ENCODE measurements at regions of chr9 and their contacts with region 1.

Region 1: DNA sequence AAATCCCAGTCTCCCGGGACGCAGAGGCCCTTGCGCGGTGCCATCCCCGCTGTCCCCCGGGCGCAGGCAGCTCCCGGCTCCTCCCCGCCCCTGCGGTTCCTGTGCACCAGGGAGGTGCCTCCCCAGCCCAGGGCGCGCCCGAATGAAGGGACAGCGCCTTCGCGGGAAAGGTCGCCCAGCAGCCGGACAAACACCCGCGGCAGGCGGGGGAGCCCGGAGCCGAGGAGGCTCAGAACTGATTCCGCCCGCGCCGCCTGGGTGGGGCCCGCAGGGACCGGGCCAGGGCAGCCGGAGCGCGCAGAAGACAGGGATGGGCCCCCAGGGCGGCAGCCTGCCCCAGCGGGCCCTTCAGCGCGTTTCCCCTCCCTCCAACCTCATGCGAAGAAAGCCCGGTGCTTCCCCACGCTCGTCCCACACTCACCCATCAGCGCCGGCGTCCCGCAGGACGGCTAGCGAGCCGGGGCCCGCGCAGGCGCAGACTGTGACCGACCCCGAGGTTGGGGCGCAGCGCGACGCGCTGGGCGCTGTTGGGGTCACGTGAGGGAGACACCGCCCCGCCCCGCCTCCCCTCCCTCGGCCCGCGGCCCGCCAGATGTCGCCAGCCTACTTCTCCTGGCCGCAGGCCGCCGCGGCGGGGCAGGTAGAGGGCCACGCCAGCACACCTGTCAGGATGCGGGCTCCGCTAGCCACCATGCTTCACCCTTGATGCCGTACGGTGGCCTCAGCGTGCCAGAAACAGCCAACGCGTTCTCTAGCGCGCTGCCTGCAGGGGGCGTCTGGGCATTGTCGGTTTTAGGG is at the start of gene SLC25A51:
- DNase-seq: peak; percentile 96
- ATAC-seq: peak; percentile 91 to 96 (median 94)
- H3K4me3 ChIP-seq: peak within 1 kb of the TSS; percentile 71 to 100 (median 87)
- H3K27ac ChIP-seq: peak within 1 kb of the TSS; percentile 19 to 92 (median 88)
- H3K4me1 ChIP-seq: peaks cover 4 to 32% (median 26%) of the 10 kb centered on the region in 9 donors
- H3K27me3 ChIP-seq: no peaks in the 10 kb centered on the region
- CTCF ChIP-seq: peak; percentile 81 to 98 (median 93)
- total RNA-seq, gene SLC25A51: 16.3 to 26.5 (median 21.3) TPM

Region 2: DNA sequence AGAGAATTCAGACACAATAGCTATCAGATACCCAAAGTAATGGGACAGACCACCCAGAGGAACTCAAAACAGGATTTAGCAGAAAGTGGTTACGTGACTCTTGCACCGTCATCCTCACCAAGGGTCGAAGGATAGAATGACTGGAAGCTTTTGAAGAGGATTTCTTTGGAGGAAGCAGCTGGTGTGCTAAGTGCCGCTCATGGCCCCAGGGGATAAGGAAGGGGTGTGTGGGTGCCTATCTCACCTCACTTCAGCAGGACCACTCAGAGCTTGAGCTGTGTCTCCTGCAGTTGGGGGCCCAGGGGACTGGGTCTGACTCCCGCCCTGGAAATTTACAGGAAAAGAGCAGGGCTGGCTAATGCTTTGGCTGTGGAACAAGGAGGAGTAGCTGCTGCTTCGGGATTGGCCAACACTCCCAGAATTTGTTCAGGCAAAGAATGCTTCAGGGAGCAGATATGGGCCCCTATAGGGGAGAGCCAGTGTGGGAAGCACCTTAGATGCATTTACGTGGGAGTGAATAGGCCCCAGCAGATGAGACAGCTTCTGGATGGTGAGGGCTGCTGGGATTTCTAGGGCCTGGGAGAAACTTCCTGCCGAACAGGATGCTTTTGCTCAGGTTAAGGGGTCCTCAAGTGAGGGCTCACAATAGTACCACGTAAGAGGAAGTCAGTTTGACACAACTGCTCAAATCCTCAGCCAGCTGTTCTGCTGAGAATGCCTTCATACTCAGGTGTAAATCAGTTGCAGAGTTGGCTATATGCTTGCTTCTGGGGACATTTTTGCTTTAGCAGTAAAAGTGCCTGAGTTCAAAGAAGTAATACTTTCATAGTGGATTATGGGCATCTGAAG is 282.3 kb before region 1 on chr9:
- intact Hi-C with region 1: no loop called
- DNase-seq: no peak
- ATAC-seq: peak in 1 of 8 donors; percentile 30
- H3K4me3 ChIP-seq: no peak overlapping the region
- H3K27ac ChIP-seq: no peak overlapping the region
- H3K4me1 ChIP-seq: no peaks in the 10 kb centered on the region
- H3K27me3 ChIP-seq: peaks cover 0 to 5% (median 0%) of the 10 kb centered on the region in 7 donors
- CTCF ChIP-seq: no peak

Region 3: DNA sequence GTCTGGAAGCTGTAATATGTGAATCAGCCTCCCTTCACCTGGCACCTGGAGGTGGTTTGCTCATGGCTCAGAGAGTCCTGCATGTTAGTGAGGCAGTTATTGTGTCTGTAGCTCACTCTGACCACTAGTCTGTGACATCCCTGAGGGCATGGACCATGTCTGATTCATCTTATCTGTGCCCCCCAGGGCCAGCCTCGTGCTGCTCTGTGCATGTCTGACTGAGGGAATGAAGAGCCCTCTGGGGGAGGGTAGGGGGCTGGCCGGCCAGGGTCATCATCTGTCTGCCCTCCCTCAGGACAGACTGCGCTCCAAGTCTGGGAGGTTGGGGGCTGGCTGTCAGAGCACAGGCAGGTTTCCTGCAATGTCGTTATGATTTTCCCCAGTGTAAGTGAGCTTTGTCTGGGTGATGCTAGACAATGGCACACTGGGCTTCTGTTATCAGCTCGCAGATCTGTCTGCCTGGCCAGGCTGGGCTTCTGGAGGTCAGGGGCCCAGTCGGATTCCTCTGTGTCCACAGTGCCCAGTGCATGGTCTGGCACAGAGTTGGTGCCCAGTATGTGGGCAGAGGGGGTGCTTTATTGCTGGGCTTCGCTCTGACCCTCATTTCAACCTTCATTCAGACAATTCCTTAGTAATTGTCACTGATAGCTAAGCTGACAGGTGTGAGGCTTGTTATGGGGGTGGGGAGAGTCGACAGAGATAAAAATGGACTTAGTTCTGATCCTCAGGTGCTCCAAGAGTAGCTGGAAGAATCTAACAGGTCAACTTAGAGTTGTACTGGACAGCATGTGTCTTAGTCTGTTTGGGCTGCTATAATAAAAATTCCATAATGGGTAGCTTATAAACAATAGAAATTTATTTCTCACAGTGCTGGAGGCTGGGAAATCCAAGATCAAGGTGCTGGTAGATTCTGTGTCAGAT is 250.9 kb after region 1 on chr9:
- intact Hi-C with region 1: loop called in 1 of 10 experiments (anchors 5 kb)
- DNase-seq: no peak
- ATAC-seq: no peak
- H3K4me3 ChIP-seq: no peak overlapping the region
- H3K27ac ChIP-seq: no peak overlapping the region
- H3K4me1 ChIP-seq: no peaks in the 10 kb centered on the region
- H3K27me3 ChIP-seq: peaks cover 0 to 8% (median 0%) of the 10 kb centered on the region in 7 donors
- CTCF ChIP-seq: no peak

Region 4: GRCh38 chr9:38392235-38393127 is 488.6 kb after region 1 on chr9 and contains the start of gene ALDH1B1:
- intact Hi-C with region 1: loop called in 2 of 10 experiments (anchors 10 kb)
- DNase-seq: peak; percentile 80 to 87
- ATAC-seq: peak; percentile 98 to 99 (median 99)
- H3K4me3 ChIP-seq: peak within 1 kb of the TSS; percentile 54 to 89 (median 76)
- H3K27ac ChIP-seq: peak within 1 kb of the TSS in 8 of 10 donors; percentile 11 to 79 (median 54)
- H3K4me1 ChIP-seq: peaks cover 0 to 28% (median 15%) of the 10 kb centered on the region in 9 donors
- H3K27me3 ChIP-seq: peaks cover 0 to 3% (median 0%) of the 10 kb centered on the region in 7 donors
- CTCF ChIP-seq: peak in 5 of 9 donors; percentile 8 to 27 (median 22)
- total RNA-seq, gene ALDH1B1: 12.1 to 30.2 (median 18.9) TPM

Measured in heart right ventricle (tissue), 16 donors.